GM10248 (cell line): ENCODE measurements at regions of chr13 and their contacts with region 1.

Region 1: DNA sequence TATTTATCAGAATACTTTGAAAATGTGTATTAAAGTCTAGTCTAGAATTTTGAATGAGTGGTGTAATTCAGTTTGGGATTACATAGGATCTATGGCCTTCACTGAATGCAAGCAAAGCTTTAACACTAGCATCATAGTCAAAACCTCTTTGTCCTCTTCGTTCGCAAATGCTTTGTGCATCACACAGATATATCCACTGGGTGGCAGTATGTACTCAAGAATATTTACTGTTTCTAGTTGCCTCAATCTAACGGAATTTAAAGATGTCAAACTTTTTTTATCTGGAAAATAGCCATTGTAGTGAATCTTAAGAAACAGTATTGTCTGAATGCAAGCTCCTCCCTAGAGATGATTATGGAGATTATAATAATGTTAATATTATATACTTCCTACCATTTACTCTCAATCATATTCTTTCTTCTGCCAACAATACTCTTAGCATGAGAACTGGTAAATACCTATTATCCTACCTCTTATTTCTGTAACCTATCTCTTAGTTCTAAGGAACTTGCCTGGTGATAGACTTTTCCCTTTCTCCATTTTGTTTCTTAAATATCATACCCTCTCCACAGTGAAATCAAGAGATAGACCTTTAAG is 25.8 kb downstream of the LACC1 start:
- DNase-seq: peak; percentile 48
- CTCF ChIP-seq: peak; percentile 81

Region 2: GRCh38 chr13:44050450-44051063 is 145.0 kb after region 1 on chr13:
- CTCF ChIA-PET with region 1: interaction called, 11 read pairs
- POLR2A ChIA-PET with region 1: no interaction called
- DNase-seq: peak; percentile 20
- CTCF ChIP-seq: peak; percentile 46

Region 3: DNA sequence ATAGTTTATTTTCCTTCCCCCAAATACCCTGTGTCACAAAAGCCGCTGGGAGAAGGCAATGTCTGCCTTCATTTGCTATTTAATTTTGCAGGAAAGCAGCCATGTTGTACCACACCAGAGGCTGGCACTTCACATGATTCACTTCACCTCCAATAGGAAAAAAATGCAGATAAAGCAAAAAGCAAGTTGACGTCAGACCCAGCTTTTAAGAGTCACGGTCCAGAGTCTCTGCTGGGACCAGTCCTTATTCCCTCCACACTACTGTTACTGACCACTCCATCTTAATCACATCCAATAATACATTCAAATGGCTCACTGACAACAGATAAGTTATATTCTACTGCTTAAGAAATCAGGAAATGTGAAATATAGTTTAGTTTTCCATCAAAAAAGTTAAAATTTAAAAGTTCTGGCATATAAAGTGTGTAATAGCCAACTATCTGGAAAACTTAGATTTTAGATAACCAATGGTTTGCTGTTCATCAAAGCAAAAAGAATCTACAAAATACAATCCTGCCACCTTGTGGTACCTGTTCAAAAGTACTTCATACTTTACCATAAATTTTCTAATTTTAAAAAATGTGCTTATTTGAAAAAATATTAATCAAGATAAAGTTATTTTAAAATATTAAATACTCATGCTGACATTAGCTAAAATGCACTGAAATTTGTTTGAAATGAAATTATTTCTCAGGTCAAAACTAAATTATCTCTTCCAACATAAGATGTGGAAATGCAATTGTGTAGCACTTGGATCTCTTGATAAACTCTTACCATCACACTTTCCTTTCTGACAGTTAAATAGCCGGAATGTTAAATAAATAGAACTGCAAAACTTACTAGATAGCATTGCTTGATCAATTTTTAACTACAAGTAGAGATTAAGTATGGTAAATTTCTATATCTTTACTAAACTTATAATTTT is 565.4 kb after region 1 on chr13:
- CTCF ChIA-PET with region 1: interaction called, 30 read pairs
- POLR2A ChIA-PET with region 1: no interaction called
- DNase-seq: no peak
- CTCF ChIP-seq: peak; percentile 31